Cardiac septum (tissue), 1 donor: ENCODE measurements at regions of chr3 and their contacts with region 1.

Region 1: GRCh38 chr3:142578327-142579223 is at the start of gene ATR:
- DNase-seq: peak; percentile 98
- total RNA-seq, gene ATR: 12.1 TPM

Region 2: DNA sequence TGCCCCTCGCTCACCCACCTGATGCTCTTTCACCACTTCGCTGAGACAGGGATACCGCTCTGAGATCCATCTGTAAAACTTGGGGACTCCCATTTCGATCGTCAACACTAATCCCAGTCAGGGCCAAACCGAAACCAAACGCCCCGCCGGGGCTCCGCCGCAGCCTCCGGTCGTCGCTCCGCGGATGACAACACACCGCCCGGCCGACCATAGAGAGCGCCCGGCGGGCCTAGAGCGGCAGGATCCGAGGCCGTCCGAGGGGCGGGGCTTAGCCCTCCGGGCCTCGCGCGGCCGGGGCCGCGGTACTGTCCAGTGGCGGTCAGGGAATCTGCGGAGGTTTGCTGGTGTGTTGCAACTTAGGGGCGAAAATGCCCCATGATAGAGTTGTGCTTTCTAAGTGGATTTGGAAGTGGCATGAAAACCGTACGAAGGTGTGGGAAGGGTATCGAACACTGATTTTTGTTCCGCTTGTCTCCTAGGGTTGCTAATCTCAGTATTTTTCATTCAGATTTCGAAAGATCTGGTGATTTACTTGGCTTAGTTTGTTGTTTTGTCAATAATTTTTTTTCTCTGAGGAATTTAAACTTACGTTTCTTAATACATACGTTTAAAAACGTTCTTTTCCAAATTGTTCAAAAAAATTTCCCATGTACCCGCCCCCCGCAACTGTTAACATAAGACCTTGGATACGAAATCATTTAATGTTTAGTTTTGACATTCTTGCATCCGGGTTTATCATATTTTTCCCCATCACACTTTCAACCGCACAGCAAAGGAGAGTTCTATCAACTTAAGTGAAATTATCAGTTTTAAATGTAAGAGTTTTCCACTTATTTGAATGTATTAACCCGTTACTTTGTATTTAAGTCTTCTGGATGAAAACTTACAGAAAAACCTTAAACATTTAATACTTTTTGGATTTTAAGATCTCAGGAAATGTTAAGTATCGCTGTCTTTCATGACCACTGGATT is 130.4 kb before region 1 on chr3 and contains the start of gene XRN1:
- intact Hi-C with region 1: loop called (anchors 5 kb)
- DNase-seq: peak; percentile 98
- total RNA-seq, gene XRN1: 24.5 TPM

Region 3: DNA sequence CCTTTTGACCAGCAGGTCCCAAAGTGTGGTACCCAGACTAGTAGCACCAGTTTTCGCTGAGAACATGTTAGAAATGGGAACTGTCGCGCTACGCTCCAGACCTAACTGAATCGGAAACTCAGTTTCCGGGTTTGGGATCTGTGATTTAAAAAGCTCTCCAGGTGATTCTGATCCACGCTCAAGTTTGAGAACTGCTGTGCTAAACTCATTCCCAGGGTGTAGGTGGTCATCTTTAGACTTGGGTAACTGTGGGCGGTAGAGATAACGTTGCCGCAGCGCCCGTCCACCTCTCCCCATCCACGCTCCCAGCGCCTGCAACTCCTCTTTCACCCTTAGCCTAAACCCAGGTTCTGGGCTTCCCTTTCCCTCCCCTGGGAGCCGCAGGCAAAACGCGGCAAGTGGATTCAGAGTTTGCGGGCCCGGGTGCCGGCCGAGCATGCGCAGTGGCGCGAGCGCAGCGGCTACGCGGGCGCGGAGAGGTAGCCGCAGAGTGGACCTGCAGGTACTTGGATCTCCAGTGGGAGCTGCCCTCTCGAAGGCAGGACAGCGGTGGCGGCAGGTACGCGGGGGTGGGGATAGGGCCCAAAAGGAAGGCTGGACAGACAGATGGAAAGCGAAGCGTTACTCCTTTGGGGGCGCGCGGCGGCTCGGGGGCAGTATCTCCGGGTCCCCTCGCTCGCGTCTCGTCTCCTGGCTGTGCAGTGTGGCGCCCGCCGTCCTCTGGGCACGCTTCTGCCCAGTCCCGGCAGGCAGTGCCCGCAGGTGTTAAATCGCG is 17.6 kb after region 1 on chr3 and contains the start of gene PLS1:
- intact Hi-C with region 1: loop called (anchors 2 kb)
- DNase-seq: peak; percentile 94
- total RNA-seq, gene PLS1: 0.81 TPM

Region 4: GRCh38 chr3:142723968-142724681 is 145.6 kb after region 1 on chr3 and contains the start of gene TRPC1:
- intact Hi-C with region 1: loop called (anchors 5 kb)
- DNase-seq: peak; percentile 87
- total RNA-seq, gene TRPC1: 18.7 TPM

Region 5: GRCh38 chr3:143001369-143002082 is 423.0 kb after region 1 on chr3 and contains the start of gene U2SURP:
- intact Hi-C with region 1: loop called (anchors 2 kb)
- DNase-seq: peak; percentile 98
- total RNA-seq, gene U2SURP: 40.6 TPM